IMR-90 (cell line): ENCODE measurements at regions of chr11 and their contacts with region 1.

Region 1: DNA sequence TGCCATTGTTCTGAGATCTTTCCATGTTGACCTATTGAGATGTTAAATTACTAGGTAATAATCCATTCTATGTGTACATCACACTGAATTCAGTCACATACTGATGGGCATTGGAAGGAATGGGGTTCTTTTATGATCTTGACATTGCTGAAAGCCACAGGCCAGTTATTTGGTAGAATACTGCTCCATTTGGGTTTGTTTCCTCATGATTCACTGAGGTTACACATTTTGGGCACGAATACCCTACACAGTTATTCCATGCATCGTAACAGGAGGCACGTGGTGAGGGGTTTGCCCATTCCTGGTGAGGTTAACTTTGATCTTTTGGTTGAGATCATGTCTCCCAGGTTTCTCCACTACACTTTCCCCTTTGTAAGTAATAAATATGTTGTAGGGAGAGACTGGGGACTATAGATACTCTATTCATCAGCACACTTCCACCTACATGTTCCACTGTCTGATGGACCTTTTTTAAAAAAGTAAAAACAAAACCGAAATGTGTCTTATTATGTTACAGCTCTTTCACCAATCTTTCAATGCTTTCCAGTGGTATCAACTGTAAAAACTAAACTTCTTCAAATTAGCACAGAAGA is 12.0 kb upstream of the FOLR1 start:
- DNase-seq: no peak
- ATAC-seq: no peak
- H3K4me3 ChIP-seq: no peak overlapping the region
- H3K27ac ChIP-seq: no peak overlapping the region
- H3K4me1 ChIP-seq: 0 out of 2 replicates have a peak, but pooled peaks cover 1% of the 10 kb centered on the region
- H3K27me3 ChIP-seq: no peaks in the 10 kb centered on the region; the same call in 1 of the 2 replicates
- CTCF ChIP-seq: no peak
- POLR2A ChIP-seq: no peak
- RAD21 ChIP-seq: no peak

Region 2: DNA sequence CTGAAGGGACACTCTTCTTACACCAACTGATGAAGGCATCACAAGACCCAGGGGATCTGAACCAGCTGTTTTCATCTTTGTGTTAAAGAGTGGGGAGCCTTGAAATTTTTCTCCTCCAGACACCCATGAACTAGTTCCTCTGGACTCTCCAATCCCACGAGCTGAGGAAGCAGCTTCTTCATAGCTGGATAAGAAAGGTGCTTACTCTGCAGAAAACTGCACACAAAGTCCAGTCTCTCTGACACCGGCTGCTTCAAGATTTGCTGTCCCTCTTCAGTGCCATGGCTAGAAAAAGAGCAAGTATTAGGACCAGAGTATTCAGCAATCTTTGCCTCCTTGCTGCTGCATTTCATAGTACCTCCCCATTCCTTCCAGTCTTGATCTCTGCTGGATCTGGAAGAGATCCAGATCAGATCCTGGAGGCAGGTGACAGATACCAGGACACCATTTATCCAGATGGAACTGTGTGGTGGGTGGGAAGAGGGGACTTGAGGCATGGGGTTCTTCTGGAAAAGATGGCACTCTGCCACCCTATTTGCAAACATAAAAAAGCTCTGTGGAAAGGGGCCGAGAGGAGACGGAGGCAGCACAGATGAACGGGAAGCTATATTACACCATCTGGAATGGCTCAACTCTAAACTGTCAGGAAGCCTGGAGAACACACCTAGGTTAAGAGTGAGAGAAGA is 155.7 kb before region 1 on chr11:
- CTCF ChIA-PET with region 1: interaction called, 12 read pairs
- POLR2A ChIA-PET with region 1: no interaction called
- dilution Hi-C with region 1: no loop called
- in situ Hi-C with region 1: loop called (anchors 5 kb)
- intact Hi-C with region 1: loop called (anchors 1 kb)
- DNase-seq: no peak
- ATAC-seq: no peak
- H3K4me3 ChIP-seq: no peak overlapping the region
- H3K27ac ChIP-seq: no peak overlapping the region; the same call in 1 of the 2 replicates
- H3K4me1 ChIP-seq: peaks cover 9% of the 10 kb centered on the region
- H3K27me3 ChIP-seq: no peaks in the 10 kb centered on the region
- CTCF ChIP-seq: no peak
- POLR2A ChIP-seq: no peak
- RAD21 ChIP-seq: no peak

Region 3: GRCh38 chr11:72102946-72103753 is 76.8 kb before region 1 on chr11 and contains the start of gene LAMTOR1:
- CTCF ChIA-PET with region 1: interaction called, 3 read pairs
- POLR2A ChIA-PET with region 1: no interaction called
- dilution Hi-C with region 1: no loop called
- in situ Hi-C with region 1: no loop called
- intact Hi-C with region 1: loop called (anchors 5 kb)
- DNase-seq: peak; percentile 99
- ATAC-seq: peak; percentile 95
- H3K4me3 ChIP-seq: peak within 1 kb of the TSS; percentile 75
- H3K27ac ChIP-seq: peak within 1 kb of the TSS; percentile 94
- H3K4me1 ChIP-seq: peaks cover 10% of the 10 kb centered on the region
- H3K27me3 ChIP-seq: no peaks in the 10 kb centered on the region
- CTCF ChIP-seq: peak; percentile 48
- POLR2A ChIP-seq: peak; percentile 93
- RAD21 ChIP-seq: peak; percentile 37
- total RNA-seq, gene LAMTOR1: 118 and 137 TPM in 2 replicates

Region 4: DNA sequence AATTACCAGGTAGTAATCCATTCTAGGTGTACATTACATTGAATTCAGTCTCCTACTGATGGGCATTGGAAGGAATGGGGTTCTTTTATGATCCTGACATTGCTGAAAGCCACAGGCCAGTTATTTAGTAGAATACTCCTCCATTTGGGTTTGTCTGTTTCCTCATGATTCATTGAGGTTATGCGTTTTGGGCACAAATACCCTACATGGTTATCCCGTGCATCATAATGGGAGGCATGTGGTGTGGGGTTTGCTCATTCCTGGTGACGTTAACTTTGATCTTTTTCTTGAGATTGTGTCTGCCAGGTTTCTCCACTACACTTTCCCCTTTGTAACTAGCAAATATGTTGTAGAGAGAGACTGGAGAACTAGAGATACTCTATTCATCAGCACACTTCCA is 38.8 kb before region 1 on chr11:
- CTCF ChIA-PET with region 1: no interaction called
- POLR2A ChIA-PET with region 1: interaction called, 3 read pairs
- dilution Hi-C with region 1: no loop called
- in situ Hi-C with region 1: no loop called
- intact Hi-C with region 1: loop called (anchors 1 kb)
- DNase-seq: peak; percentile 90
- ATAC-seq: peak; percentile 52
- H3K4me3 ChIP-seq: no peak overlapping the region
- H3K27ac ChIP-seq: peak overlapping the region; percentile 68
- H3K4me1 ChIP-seq: peaks cover 15% of the 10 kb centered on the region
- H3K27me3 ChIP-seq: no peaks in the 10 kb centered on the region
- CTCF ChIP-seq: no peak
- POLR2A ChIP-seq: no peak
- RAD21 ChIP-seq: no peak

Region 5: GRCh38 chr11:72195871-72196270 is 16.0 kb after region 1 on chr11:
- CTCF ChIA-PET with region 1: interaction called, 11 read pairs
- POLR2A ChIA-PET with region 1: no interaction called
- dilution Hi-C with region 1: no loop called
- in situ Hi-C with region 1: no loop called
- intact Hi-C with region 1: no loop called
- DNase-seq: no peak
- ATAC-seq: no peak
- H3K4me3 ChIP-seq: no peak overlapping the region
- H3K27ac ChIP-seq: no peak overlapping the region
- H3K4me1 ChIP-seq: no peaks in the 10 kb centered on the region
- H3K27me3 ChIP-seq: peaks cover 11% of the 10 kb centered on the region
- CTCF ChIP-seq: no peak
- POLR2A ChIP-seq: no peak
- RAD21 ChIP-seq: no peak